GM10248 (cell line): ENCODE measurements at regions of chr10 and their contacts with region 1.

Region 1: GRCh38 chr10:6163364-6164270 is 39.1 kb upstream of the PFKFB3 start:
- DNase-seq: peak; percentile 97
- CTCF ChIP-seq: peak; percentile 13

Region 2: GRCh38 chr10:5873515-5873995 is 290.1 kb before region 1 on chr10:
- CTCF ChIA-PET with region 1: no interaction called
- POLR2A ChIA-PET with region 1: no interaction called
- DNase-seq: peak; percentile 85
- CTCF ChIP-seq: peak; percentile 65

Region 3: GRCh38 chr10:6128591-6129251 is 34.9 kb before region 1 on chr10:
- CTCF ChIA-PET with region 1: no interaction called
- POLR2A ChIA-PET with region 1: no interaction called
- DNase-seq: no peak
- CTCF ChIP-seq: no peak

Region 4: GRCh38 chr10:6144406-6145165 is 19.0 kb before region 1 on chr10:
- CTCF ChIA-PET with region 1: interaction called, 47 read pairs
- POLR2A ChIA-PET with region 1: no interaction called
- DNase-seq: peak; percentile 91
- CTCF ChIP-seq: no peak

Region 5: GRCh38 chr10:6211671-6212635 is 48.3 kb after region 1 on chr10:
- CTCF ChIA-PET with region 1: no interaction called
- POLR2A ChIA-PET with region 1: no interaction called
- DNase-seq: no peak
- CTCF ChIP-seq: no peak